ENCODE measurements at regions of chr7 and their contacts with region 1.

Region 1: GRCh38 chr7:143380255-143380645 is 895 bp upstream of the ZYX start:
- DNase-seq: peak; percentile 76
- H3K4me3 Mint-ChIP-seq: peak overlapping the region; percentile 85
- H3K27ac Mint-ChIP-seq: peak overlapping the region; percentile 70
- H3K4me1 Mint-ChIP-seq: peaks cover 46% of the 10 kb centered on the region
- H3K27me3 Mint-ChIP-seq: no peaks in the 10 kb centered on the region

Region 2: DNA sequence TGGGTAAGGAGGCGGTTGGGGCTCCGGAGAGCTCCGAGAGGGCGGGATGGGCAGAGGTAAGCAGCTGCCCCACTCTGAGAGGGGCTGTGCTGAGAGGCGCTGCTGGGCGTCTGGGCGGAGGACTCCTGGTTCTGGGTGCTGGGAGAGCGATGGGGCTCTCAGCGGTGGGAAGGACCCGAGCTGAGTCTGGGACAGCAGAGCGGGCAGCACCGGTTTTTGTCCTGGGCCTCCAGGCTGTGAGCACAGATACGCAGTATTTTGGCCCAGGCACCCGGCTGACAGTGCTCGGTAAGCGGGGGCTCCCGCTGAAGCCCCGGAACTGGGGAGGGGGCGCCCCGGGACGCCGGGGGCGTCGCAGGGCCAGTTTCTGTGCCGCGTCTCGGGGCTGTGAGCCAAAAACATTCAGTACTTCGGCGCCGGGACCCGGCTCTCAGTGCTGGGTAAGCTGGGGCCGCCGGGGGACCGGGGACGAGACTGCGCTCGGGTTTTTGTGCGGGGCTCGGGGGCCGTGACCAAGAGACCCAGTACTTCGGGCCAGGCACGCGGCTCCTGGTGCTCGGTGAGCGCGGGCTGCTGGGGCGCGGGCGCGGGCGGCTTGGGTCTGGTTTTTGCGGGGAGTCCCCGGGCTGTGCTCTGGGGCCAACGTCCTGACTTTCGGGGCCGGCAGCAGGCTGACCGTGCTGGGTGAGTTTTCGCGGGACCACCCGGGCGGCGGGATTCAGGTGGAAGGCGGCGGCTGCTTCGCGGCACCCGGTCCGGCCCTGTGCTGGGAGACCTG is 583.5 kb before region 1 on chr7:
- intact Hi-C with region 1: loop called (anchors 2 kb)
- DNase-seq: no peak
- H3K4me3 Mint-ChIP-seq: peak overlapping the region; percentile 97
- H3K27ac Mint-ChIP-seq: peak overlapping the region; percentile 99
- H3K4me1 Mint-ChIP-seq: peaks cover 77% of the 10 kb centered on the region
- H3K27me3 Mint-ChIP-seq: no peaks in the 10 kb centered on the region

Region 3: GRCh38 chr7:143263266-143264195 is 116.7 kb before region 1 on chr7 and contains the start of gene GSTK1:
- intact Hi-C with region 1: loop called (anchors 5 kb)
- DNase-seq: peak; percentile 81
- H3K4me3 Mint-ChIP-seq: peak within 1 kb of the TSS; percentile 98
- H3K27ac Mint-ChIP-seq: peak within 1 kb of the TSS; percentile 94
- H3K4me1 Mint-ChIP-seq: peaks cover 67% of the 10 kb centered on the region
- H3K27me3 Mint-ChIP-seq: no peaks in the 10 kb centered on the region
- total RNA-seq, gene GSTK1: 134 and 135 TPM in 2 replicates

Region 4: DNA sequence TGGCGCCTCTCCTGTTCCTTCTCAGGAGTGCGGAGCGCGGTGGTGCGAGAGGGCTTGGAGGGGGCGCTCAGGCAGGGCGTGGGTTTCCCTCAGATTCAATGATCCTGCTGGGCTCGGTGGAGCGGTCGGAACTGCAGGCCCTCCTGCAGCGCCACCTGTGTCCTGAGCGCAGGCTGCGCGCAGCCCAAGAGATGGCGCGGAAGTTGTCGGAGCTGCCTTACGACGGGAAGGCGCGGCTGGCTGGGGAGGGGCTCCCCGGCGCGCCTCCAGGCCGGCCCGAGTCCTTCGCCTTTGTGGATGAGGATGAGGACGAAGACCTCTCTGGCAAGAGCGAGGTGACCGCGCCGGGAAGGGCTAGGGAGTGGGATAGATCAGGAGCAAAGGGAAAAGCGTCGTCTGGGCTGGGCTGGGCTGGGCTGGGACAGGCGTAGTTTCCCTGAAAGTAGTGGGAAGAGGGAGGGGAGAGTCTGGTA is 34.8 kb before region 1 on chr7:
- intact Hi-C with region 1: loop called (anchors 2 kb)
- DNase-seq: peak; percentile 53
- H3K4me3 Mint-ChIP-seq: peak overlapping the region; percentile 48
- H3K27ac Mint-ChIP-seq: no peak overlapping the region
- H3K4me1 Mint-ChIP-seq: peaks cover 8% of the 10 kb centered on the region
- H3K27me3 Mint-ChIP-seq: peaks cover 23% of the 10 kb centered on the region

Region 5: DNA sequence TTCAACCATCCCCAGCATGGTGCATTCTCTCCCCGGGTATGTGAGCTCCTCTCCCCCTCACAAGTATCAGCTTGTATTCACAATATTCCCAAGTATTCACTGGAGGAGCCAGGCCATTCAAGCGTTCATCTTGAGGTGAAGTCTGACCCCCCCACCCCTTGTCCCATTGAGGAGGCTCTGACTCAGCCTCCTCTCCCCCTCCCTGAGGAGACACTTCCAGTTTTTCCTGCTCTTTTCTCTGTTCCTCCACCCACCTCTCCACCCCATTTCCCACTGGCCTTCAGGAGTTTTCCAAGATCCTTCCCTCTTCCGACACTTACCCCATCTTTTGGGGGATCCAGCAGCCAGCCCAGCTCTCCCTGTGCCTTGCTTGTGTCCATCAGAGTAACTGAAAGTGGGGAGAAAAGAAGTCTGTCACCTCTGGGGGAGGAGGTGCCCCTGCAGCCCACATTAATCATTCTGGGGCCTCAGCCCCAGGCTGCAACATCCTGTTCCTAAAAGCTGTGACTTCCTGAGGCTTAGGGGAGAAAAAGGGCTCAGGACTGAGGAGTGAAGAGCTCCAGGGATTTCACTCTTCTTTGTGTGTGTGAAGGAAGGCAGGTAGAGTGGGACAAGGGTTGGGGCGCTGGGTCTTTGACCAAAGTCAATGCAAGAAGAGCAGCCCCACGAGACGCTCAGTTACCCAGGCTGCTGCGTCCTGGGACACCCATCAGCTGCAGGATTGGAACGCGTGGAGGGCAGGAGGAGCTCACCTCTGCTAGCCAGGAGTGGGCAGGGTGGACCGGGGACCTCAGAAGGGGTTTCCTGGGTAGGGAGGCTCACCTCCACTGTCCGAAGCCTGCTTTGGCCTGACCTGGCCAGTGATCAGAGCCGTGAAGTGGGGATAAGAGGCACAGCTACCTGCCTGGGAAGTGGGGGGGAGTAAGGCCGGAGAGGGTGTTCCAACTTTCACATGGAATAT is 27.3 kb after region 1 on chr7:
- intact Hi-C with region 1: loop called (anchors 2 kb)
- DNase-seq: no peak
- H3K4me3 Mint-ChIP-seq: peak overlapping the region; percentile 60
- H3K27ac Mint-ChIP-seq: no peak overlapping the region
- H3K4me1 Mint-ChIP-seq: peaks cover 22% of the 10 kb centered on the region
- H3K27me3 Mint-ChIP-seq: peaks cover 52% of the 10 kb centered on the region

Region 6: DNA sequence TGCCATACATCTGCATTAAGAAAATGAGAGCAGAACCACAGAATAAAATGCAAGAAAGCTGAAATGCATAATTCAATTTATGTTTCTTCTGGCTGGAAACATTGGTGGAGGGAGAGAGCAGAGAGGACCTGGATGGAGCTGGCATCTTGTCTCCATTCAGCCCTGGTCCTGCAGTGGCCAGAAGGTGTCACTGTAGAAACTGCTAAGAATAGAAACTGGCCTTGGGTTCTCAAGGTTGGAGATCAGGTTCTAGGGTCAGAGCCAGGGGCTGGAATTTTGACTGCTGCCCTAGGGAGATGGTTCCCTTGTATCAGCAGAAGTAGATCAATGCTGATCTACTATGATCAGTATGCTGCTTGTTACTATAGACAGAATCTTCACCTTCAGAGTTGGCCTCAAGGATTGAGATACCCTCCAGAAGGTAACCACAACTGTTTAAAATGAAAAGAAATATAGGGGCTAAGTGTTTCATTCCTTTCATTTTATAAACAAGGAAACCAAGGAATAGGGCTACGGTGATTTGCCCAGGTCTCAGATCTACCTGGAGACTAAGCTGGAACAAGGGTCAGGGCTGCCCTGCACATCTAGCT is 110.6 kb after region 1 on chr7:
- intact Hi-C with region 1: loop called (anchors 5 kb)
- DNase-seq: no peak
- H3K4me3 Mint-ChIP-seq: no peak overlapping the region
- H3K27ac Mint-ChIP-seq: no peak overlapping the region
- H3K4me1 Mint-ChIP-seq: peaks cover 34% of the 10 kb centered on the region
- H3K27me3 Mint-ChIP-seq: peaks cover 2% of the 10 kb centered on the region

Measured in activated T-helper 1 cell treated with anti-CD3 and anti-CD28 coated beads, Interleukin-12 subunit alpha, Interleukin-12 subunit beta, Interleukin-2, Interleukin-4 antibody, amounts not matched to agents 30 ng/mL and 10 ng/mL and 1 ng/mL, durations not matched to agents 14 hours and 24 hours and 36 hours (primary cell).